OCI-LY7 (cell line): ENCODE measurements at regions of chr6 and their contacts with region 1.

Region 1: DNA sequence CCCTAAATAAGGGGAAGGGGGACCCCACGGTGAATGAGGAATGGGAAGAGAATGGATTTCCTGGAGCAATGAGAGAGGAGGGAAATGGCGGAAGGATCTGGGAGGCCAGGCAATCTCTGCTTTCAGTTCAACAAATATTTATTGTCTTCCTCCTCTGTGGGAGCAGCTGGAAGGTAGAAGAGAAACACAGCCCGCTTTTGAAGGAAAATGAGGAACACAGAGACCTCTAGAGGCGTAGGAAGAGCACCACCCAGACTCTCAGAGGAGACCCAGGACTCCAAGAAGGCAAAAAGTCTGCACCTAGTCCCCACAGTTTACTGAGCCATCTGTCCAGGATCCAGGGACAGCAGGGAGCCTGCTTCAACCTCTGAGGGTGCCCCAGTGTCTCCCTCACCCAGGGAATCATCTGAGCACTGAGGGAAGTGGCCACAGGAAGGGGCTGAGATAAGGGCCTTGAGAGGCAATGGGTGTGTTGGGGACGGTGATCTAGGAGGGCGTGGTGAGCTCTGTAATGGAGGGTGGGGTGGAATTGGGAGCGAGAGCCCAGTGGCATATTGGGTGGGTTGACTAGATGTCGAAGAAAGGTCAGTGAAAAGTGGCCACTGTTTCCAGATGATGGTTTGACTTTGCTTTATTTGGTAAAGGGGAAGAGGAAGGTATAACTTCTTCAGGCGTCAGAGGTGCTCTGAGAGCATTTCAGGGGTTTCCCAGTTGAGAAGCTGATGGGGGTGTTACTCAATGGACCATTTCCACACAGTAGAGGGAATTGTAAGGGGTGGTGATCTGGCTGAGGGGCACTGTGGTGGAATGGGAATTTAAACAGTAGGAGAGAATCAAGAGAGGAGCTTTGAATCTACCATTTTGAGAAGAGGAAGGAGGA is 610 bp downstream of the PSORS1C1 start:
- DNase-seq: no peak
- H3K4me3 ChIP-seq: no peak overlapping the region
- H3K27ac ChIP-seq: no peak overlapping the region
- H3K4me1 ChIP-seq: no peaks in the 10 kb centered on the region
- CTCF ChIP-seq: peak; percentile 37; the same call in 1 of the 2 replicates

Region 2: GRCh38 chr6:30380464-30380863 is 734.7 kb before region 1 on chr6:
- CTCF ChIA-PET with region 1: interaction called, 12 read pairs
- POLR2A ChIA-PET with region 1: no interaction called
- intact Hi-C with region 1: no loop called
- DNase-seq: no peak
- H3K4me3 ChIP-seq: no peak overlapping the region
- H3K27ac ChIP-seq: no peak overlapping the region
- H3K4me1 ChIP-seq: no peaks in the 10 kb centered on the region
- CTCF ChIP-seq: no peak

Region 3: GRCh38 chr6:31125586-31126363 is 10.6 kb after region 1 on chr6:
- CTCF ChIA-PET with region 1: no interaction called
- POLR2A ChIA-PET with region 1: no interaction called
- intact Hi-C with region 1: no loop called
- DNase-seq: no peak
- H3K4me3 ChIP-seq: no peak overlapping the region
- H3K27ac ChIP-seq: no peak overlapping the region
- H3K4me1 ChIP-seq: no peaks in the 10 kb centered on the region
- CTCF ChIP-seq: no peak